Colonic mucosa (tissue), 4 donors: ENCODE measurements at regions of chr15 and their contacts with region 1.

Region 1: GRCh38 chr15:57769266-57769665 is 62.8 kb downstream of the POLR2M start:
- DNase-seq: no peak
- H3K4me3 ChIP-seq: no peak overlapping the region
- H3K27ac ChIP-seq: no peak overlapping the region
- H3K4me1 ChIP-seq: no peaks in the 10 kb centered on the region
- H3K27me3 ChIP-seq: no peaks in the 10 kb centered on the region
- CTCF ChIP-seq: no peak

Region 2: DNA sequence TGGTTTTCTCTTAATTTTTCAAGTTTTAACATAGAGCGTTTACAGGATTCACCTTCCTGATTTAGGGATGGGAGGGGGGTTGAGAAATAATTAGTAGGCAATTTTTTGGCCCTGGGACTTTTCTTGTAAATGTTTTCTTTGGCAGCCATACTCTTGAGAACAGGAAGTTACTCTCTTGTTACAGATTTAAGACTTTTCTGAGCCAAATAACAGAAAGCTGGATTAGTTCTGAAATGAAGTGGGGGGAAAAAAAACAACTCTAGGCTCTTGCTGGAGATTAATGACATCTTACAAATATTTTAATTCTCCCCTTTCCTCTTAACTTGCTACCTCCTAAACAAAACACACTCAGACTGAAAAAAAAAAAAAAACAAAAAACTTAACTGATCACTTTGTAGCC is 76.6 kb before region 1 on chr15:
- intact Hi-C with region 1: no loop called
- DNase-seq: no peak
- H3K4me3 ChIP-seq: no peak overlapping the region
- H3K27ac ChIP-seq: no peak overlapping the region
- H3K4me1 ChIP-seq: no peaks in the 10 kb centered on the region
- H3K27me3 ChIP-seq: no peaks in the 10 kb centered on the region
- CTCF ChIP-seq: no peak

Region 3: DNA sequence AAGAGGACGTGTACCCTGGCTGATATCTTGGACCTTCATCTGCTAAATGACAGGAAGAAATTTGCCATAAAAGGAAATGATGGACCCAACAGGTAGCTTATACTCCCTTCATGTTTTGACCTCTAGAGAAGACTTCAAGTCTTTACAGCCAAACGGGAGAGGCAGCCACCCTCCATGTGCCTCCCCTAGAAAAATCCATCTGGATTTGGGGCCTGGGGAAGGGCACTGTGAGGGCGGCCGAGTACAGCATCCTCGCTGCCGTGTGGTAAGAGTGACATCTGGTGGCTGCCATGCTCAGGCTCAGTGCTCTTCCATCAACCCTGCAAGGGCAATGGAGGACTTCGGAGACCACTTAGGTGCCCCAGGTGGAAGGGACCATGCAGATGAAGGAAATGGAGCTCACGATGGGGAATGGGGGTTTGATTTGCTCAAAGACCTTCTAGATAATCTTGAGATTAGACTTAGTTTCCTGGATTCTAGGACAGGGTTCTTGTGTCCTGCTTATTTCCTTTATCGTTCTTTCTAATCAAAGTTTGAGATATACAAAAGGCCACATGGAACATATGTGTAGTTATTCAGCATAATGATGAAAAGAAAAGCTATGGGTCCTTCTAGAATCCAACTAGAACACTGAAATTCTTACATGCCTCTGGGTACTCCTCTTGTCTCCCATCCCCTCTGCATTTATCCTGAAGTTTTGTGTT is 413.3 kb after region 1 on chr15:
- intact Hi-C with region 1: loop called (anchors 10 kb)
- DNase-seq: no peak
- H3K4me3 ChIP-seq: no peak overlapping the region
- H3K27ac ChIP-seq: no peak overlapping the region
- H3K4me1 ChIP-seq: no peaks in the 10 kb centered on the region
- H3K27me3 ChIP-seq: no peaks in the 10 kb centered on the region
- CTCF ChIP-seq: peak; percentile 56